Heart left ventricle (tissue), 16 donors: ENCODE measurements at regions of chr4 and their contacts with region 1.

Region 1: GRCh38 chr4:42656944-42657792 is at the start of gene ATP8A1:
- DNase-seq: peak; percentile 94 to 96 (median 95)
- ATAC-seq: peak; percentile 95 to 98 (median 98)
- H3K4me3 ChIP-seq: peak within 1 kb of the TSS; percentile 69 to 90 (median 87)
- H3K27ac ChIP-seq: peak within 1 kb of the TSS; percentile 75 to 96 (median 92)
- H3K4me1 ChIP-seq: peaks cover 8 to 48% (median 29%) of the 10 kb centered on the region in 12 donors
- H3K27me3 ChIP-seq: no peaks in the 10 kb centered on the region
- CTCF ChIP-seq: peak in 2 of 12 donors; percentile 3 to 15
- POLR2A ChIP-seq: peak in 1 of 2 donors; percentile 64
- total RNA-seq, gene ATP8A1: 12.9 to 29.7 (median 16.6) TPM

Region 2: DNA sequence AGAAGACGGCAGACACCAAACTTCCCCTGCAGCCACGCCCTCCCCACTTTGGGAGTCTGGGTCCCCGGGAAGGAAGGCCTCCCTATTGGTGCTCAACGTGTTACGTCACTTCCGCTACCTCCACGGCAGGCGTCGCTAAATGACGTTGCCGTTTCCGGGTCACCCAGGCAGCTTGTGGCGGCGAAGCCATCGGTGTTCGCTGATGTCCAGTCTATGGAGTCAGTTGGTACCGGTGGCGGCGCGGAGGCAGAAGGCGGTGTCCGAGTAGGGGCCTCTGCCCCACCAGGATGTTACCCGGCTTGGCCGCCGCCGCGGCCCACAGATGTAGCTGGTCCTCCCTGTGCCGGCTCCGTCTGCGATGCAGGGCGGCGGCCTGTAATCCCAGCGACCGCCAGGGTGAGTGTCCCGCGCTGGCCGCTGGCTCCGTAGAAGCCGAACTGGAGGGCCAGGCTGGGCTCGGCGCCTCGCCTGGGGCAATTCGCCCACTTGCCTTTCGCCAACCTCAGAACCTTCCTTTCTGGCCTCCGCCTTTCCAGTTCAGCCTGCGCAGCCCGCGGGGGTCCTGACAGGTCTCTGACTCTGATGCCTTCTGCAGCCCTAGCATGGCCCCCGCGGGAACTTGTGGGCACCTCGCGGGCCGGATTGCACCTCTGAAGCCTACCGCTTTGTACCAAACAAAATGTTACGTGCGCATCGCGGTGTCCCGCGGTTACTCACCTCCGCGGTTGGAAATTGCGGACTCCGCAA is 666.6 kb before region 1 on chr4 and contains the start of gene SLC30A9:
- intact Hi-C with region 1: loop called in 1 of 10 experiments (anchors 10 kb)
- DNase-seq: peak; percentile 94 to 97 (median 97)
- ATAC-seq: peak; percentile 98 to 99 (median 99)
- H3K4me3 ChIP-seq: peak within 1 kb of the TSS; percentile 69 to 97 (median 86)
- H3K27ac ChIP-seq: peak within 1 kb of the TSS; percentile 45 to 93 (median 85)
- H3K4me1 ChIP-seq: peaks cover 3 to 40% (median 24%) of the 10 kb centered on the region in 12 donors
- H3K27me3 ChIP-seq: no peaks in the 10 kb centered on the region
- CTCF ChIP-seq: peak in 9 of 12 donors; percentile 16 to 57 (median 38)
- POLR2A ChIP-seq: peak; percentile 66 to 91
- total RNA-seq, gene SLC30A9: 48.9 to 99.2 (median 74.5) TPM

Region 3: GRCh38 chr4:42425146-42426065 is 231.8 kb before region 1 on chr4:
- intact Hi-C with region 1: no loop called
- DNase-seq: no peak
- ATAC-seq: no peak
- H3K4me3 ChIP-seq: no peak overlapping the region
- H3K27ac ChIP-seq: no peak overlapping the region
- H3K4me1 ChIP-seq: no peaks in the 10 kb centered on the region
- H3K27me3 ChIP-seq: no peaks in the 10 kb centered on the region
- CTCF ChIP-seq: no peak
- POLR2A ChIP-seq: no peak

Region 4: GRCh38 chr4:42568610-42569207 is 88.5 kb before region 1 on chr4:
- intact Hi-C with region 1: loop called in 7 of 10 experiments (anchors 2 to 10 kb)
- DNase-seq: peak in 4 of 5 donors; percentile 52 to 64 (median 62)
- ATAC-seq: peak in 3 of 4 donors; percentile 79 to 84 (median 81)
- H3K4me3 ChIP-seq: no peak overlapping the region
- H3K27ac ChIP-seq: no peak overlapping the region
- H3K4me1 ChIP-seq: peaks cover 0 to 14% (median 1%) of the 10 kb centered on the region in 12 donors
- H3K27me3 ChIP-seq: no peaks in the 10 kb centered on the region
- CTCF ChIP-seq: peak; percentile 61 to 86 (median 77)
- POLR2A ChIP-seq: no peak

Region 5: DNA sequence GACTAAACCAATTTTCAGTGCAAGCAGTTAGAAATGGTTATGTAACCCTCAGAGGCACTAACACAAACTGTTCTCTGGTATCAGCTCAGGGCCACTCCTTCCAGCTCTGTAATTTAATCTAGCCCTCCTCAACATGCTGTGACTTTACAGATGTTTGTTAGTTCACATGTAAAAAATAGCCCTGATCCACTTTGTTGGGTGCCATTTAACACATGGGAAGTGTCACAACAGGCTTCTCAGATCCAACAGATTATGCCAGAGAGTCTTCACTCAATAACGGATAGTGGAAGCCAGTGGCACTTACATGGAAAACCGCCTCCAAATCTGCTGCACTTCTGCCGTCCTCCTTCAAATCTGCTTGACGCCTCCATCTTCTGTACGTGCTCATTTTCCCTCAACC is 51.9 kb before region 1 on chr4:
- intact Hi-C with region 1: loop called in 7 of 10 experiments (anchors 2 to 5 kb)
- DNase-seq: no peak
- ATAC-seq: peak; percentile 74 to 83 (median 82)
- H3K4me3 ChIP-seq: no peak overlapping the region
- H3K27ac ChIP-seq: peak overlapping the region in 6 of 12 donors; percentile 2 to 67 (median 28)
- H3K4me1 ChIP-seq: peaks cover 0 to 50% (median 18%) of the 10 kb centered on the region in 12 donors
- H3K27me3 ChIP-seq: no peaks in the 10 kb centered on the region
- CTCF ChIP-seq: no peak
- POLR2A ChIP-seq: no peak

Region 6: DNA sequence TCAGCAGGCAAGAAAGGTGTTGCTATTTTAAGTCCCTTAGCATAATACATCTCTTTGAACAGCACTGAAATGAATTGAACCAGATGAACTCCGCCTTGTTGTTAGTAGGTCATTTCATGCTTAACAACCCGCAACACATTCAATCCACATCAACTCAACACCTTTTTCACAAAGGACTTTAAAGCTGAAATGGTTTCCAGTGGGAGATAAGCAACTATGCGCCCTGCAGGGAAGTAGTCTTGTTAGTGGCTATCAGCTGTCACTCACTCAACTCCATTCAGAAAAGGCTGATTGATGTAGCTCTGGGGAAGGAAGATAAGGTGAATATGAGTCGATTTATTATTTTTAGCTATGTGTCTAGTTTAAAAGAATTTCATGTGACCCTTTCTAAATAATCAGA is 46.2 kb before region 1 on chr4:
- intact Hi-C with region 1: loop called in 6 of 10 experiments (anchors 2 to 5 kb)
- DNase-seq: peak in 2 of 5 donors; percentile 18 to 32
- ATAC-seq: peak; percentile 55 to 88 (median 86)
- H3K4me3 ChIP-seq: no peak overlapping the region
- H3K27ac ChIP-seq: peak overlapping the region in 7 of 12 donors; percentile 21 to 72 (median 48)
- H3K4me1 ChIP-seq: peaks cover 0 to 47% (median 13%) of the 10 kb centered on the region in 12 donors
- H3K27me3 ChIP-seq: no peaks in the 10 kb centered on the region
- CTCF ChIP-seq: no peak
- POLR2A ChIP-seq: no peak

Region 7: GRCh38 chr4:42627885-42628646 is 29.1 kb before region 1 on chr4:
- intact Hi-C with region 1: loop called in 2 of 10 experiments (anchors 1 kb)
- DNase-seq: peak; percentile 81 to 88 (median 86)
- ATAC-seq: peak; percentile 97 to 100 (median 99)
- H3K4me3 ChIP-seq: peak overlapping the region in 1 of 12 donors; percentile 5
- H3K27ac ChIP-seq: peak overlapping the region in 9 of 12 donors; percentile 0 to 66 (median 43)
- H3K4me1 ChIP-seq: peaks cover 0 to 46% (median 25%) of the 10 kb centered on the region in 12 donors
- H3K27me3 ChIP-seq: no peaks in the 10 kb centered on the region
- CTCF ChIP-seq: no peak
- POLR2A ChIP-seq: no peak